HCT116 (cell line): ENCODE measurements at regions of chr16 and their contacts with region 1.

Region 1: GRCh38 chr16:69123910-69124309 is 8.5 kb downstream of the CHTF8 start:
- DNase-seq: no peak
- ATAC-seq: peak; percentile 45
- H3K4me3 ChIP-seq: no peak overlapping the region
- H3K27ac ChIP-seq: no peak overlapping the region
- H3K4me1 ChIP-seq: peaks cover 0 to 10% of the 10 kb centered on the region in 2 experiments; a peak in 2 of 4 replicates
- H3K27me3 ChIP-seq: no peaks in the 10 kb centered on the region
- CTCF ChIP-seq: peak; percentile 56 to 72 (median 62); a peak in 5 of 6 replicates
- POLR2A ChIP-seq: no peak
- RAD21 ChIP-seq: peak; percentile 86

Region 2: GRCh38 chr16:68590201-68590994 is 533.5 kb before region 1 on chr16:
- CTCF ChIA-PET with region 1: interaction called, 3 read pairs
- POLR2A ChIA-PET with region 1: no interaction called
- RAD21 ChIA-PET with region 1: no interaction called
- intact Hi-C with region 1: loop called (anchors 5 kb)
- DNase-seq: peak; percentile 54
- ATAC-seq: peak; percentile 100
- H3K4me3 ChIP-seq: peak overlapping the region; percentile 13 to 27; a peak in 2 of 4 replicates
- H3K27ac ChIP-seq: no peak overlapping the region
- H3K4me1 ChIP-seq: peaks cover 0 to 9% of the 10 kb centered on the region in 2 experiments; a peak in 3 of 4 replicates
- H3K27me3 ChIP-seq: no peaks in the 10 kb centered on the region
- CTCF ChIP-seq: peak; percentile 85 to 90 (median 85)
- POLR2A ChIP-seq: no peak
- RAD21 ChIP-seq: peak; percentile 99

Region 3: GRCh38 chr16:68800257-68800875 is 323.5 kb before region 1 on chr16:
- CTCF ChIA-PET with region 1: no interaction called
- POLR2A ChIA-PET with region 1: no interaction called
- RAD21 ChIA-PET with region 1: no interaction called
- intact Hi-C with region 1: loop called (anchors 1 kb)
- DNase-seq: peak; percentile 62
- ATAC-seq: peak; percentile 95
- H3K4me3 ChIP-seq: no peak overlapping the region
- H3K27ac ChIP-seq: no peak overlapping the region
- H3K4me1 ChIP-seq: peaks cover 17 to 24% of the 10 kb centered on the region in 2 experiments
- H3K27me3 ChIP-seq: no peaks in the 10 kb centered on the region
- CTCF ChIP-seq: peak; percentile 87 to 90 (median 88)
- POLR2A ChIP-seq: no peak
- RAD21 ChIP-seq: peak; percentile 91

Region 4: DNA sequence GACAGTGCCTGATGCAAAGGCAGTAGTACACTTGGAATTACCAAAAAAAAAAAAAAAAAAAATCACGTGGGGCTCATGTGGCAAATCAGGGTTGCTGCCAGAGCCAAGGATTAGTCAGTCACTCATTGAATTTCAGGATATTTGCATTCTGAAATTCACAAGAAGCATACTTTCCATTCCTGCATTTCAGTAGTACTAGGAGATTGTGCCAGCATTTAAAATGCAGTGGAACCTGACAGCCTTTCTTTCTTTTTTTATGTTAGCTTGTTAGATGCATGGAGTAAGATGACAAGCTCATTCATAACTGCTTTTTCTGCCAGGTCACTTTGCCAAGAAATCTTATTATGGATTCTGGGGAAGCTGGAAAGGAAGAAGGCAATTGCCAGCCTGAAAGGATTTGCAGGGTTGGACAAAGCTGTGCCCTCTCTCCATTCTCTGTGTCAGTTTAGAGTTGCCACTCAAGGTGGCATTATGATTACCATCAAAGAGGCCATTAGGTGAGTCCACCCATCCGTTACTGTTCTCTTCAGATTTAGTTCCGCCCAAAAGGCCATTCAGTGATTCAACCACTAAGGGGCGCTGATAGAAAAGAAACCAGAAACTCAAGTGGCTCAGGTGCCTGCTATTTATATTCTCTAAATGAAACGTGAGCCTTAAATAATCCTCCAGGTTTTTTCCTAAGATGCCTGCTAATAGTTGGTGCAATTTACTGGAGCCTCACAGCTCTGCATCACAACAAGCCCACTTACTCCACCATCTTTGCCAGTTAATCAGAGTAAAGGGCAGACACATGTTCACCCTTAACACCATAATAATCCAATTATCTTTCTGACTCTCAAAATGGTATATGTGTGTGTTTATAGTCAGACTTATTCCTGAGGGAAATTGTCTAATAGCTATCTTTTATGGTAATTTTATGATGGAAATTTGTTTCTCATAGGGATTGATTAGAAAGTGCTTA is 221.6 kb before region 1 on chr16:
- CTCF ChIA-PET with region 1: interaction called, 16 read pairs
- POLR2A ChIA-PET with region 1: no interaction called
- RAD21 ChIA-PET with region 1: interaction called in 1 of 2 experiments, 3 read pairs
- intact Hi-C with region 1: loop called (anchors 1 kb)
- DNase-seq: peak; percentile 72
- ATAC-seq: peak; percentile 90
- H3K4me3 ChIP-seq: no peak overlapping the region
- H3K27ac ChIP-seq: no peak overlapping the region
- H3K4me1 ChIP-seq: peaks cover 0 to 13% of the 10 kb centered on the region in 2 experiments; a peak in 2 of 4 replicates
- H3K27me3 ChIP-seq: no peaks in the 10 kb centered on the region
- CTCF ChIP-seq: peak; percentile 85 to 92 (median 90)
- POLR2A ChIP-seq: no peak
- RAD21 ChIP-seq: peak; percentile 98

Region 5: GRCh38 chr16:68995011-68995504 is 128.9 kb before region 1 on chr16:
- CTCF ChIA-PET with region 1: interaction called, 4 read pairs
- POLR2A ChIA-PET with region 1: no interaction called
- RAD21 ChIA-PET with region 1: no interaction called
- intact Hi-C with region 1: loop called (anchors 5 kb)
- DNase-seq: peak; percentile 80
- ATAC-seq: peak; percentile 87
- H3K4me3 ChIP-seq: no peak overlapping the region
- H3K27ac ChIP-seq: peak overlapping the region; percentile 68
- H3K4me1 ChIP-seq: peaks cover 43 to 86% of the 10 kb centered on the region in 2 experiments
- H3K27me3 ChIP-seq: no peaks in the 10 kb centered on the region
- CTCF ChIP-seq: peak; percentile 75 to 86 (median 78)
- POLR2A ChIP-seq: no peak
- RAD21 ChIP-seq: peak; percentile 91